ENCODE measurements at regions of chr4 and their contacts with region 1.

Region 1: DNA sequence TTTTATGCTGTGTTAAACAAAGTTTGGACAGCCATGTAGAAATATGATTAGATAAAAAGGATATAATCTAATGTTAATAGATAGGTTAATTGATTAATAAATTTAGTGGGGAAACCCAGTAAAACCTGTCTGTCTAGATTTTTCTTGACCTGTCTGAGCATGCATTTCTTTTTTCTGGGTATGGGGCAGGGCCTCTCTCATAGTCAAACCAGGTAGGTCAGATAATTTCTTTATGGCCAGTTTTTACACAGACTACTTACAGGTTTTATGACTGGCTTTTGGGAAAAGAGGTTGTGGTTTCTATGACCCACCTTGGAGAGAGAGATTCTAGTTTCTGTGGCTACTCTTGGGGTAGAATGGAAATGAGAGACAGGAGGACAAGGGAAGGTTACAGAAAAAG is 135.6 kb upstream of the EPHA5 start:
- DNase-seq: no peak
- H3K4me3 ChIP-seq: no peak overlapping the region
- H3K27ac ChIP-seq: no peak overlapping the region
- H3K4me1 ChIP-seq: no peaks in the 10 kb centered on the region
- H3K27me3 ChIP-seq: no peaks in the 10 kb centered on the region
- CTCF ChIP-seq: no peak
- EP300 ChIP-seq: no peak
- POLR2A ChIP-seq: no peak

Region 2: GRCh38 chr4:65344278-65344825 is 461.6 kb before region 1 on chr4:
- intact Hi-C with region 1: loop called in 1 of 4 experiments (anchors 5 kb)
- DNase-seq: no peak
- H3K4me3 ChIP-seq: no peak overlapping the region
- H3K27ac ChIP-seq: no peak overlapping the region
- H3K4me1 ChIP-seq: no peaks in the 10 kb centered on the region
- H3K27me3 ChIP-seq: no peaks in the 10 kb centered on the region
- CTCF ChIP-seq: no peak
- EP300 ChIP-seq: no peak
- POLR2A ChIP-seq: no peak

Measured in ovary (tissue), 10 donors.